ENCODE measurements at regions of chr17 and their contacts with region 1.

Region 1: DNA sequence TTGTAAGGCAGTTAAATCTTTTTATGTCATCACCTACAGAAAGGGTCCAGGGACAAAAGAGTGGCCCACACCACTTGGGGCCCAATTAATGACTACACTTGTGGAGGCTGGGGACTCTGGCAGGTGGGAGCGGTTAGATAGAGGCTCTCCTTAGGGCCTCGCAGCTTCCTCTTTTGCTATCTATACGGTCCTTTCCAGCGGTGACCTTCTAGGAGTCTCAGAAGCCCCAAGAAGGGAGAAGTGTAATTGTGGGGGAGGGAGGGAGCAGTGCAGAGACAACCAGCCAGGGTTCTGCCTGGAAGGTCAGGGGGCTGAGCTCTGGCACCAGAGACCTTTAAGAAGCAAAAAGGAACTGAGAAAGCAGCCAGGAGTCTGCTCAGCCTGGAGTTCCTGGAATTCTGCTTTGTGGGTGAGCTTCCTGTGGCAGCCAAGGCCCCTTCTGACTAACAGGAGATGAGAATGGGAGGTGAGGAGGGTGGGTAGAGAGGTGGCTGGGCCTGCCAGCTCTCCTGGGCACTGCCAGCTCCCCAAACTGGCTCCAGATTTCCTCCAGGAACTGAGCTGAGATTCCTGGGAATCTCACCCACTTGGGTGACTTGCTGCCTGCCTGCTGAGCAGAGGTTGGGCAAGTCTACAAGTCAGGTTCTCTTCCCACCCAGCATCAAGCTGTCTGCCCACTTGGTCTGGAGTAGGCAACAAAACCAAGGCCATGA is 16.3 kb upstream of the MAP3K14 start:
- DNase-seq: no peak
- ATAC-seq: peak; percentile 77
- H3K4me3 Mint-ChIP-seq: peak overlapping the region; percentile 46
- H3K27ac Mint-ChIP-seq: peak overlapping the region; percentile 69
- H3K4me1 Mint-ChIP-seq: peaks cover 43% of the 10 kb centered on the region
- H3K27me3 Mint-ChIP-seq: no peaks in the 10 kb centered on the region
- CTCF ChIP-seq: no peak

Region 2: DNA sequence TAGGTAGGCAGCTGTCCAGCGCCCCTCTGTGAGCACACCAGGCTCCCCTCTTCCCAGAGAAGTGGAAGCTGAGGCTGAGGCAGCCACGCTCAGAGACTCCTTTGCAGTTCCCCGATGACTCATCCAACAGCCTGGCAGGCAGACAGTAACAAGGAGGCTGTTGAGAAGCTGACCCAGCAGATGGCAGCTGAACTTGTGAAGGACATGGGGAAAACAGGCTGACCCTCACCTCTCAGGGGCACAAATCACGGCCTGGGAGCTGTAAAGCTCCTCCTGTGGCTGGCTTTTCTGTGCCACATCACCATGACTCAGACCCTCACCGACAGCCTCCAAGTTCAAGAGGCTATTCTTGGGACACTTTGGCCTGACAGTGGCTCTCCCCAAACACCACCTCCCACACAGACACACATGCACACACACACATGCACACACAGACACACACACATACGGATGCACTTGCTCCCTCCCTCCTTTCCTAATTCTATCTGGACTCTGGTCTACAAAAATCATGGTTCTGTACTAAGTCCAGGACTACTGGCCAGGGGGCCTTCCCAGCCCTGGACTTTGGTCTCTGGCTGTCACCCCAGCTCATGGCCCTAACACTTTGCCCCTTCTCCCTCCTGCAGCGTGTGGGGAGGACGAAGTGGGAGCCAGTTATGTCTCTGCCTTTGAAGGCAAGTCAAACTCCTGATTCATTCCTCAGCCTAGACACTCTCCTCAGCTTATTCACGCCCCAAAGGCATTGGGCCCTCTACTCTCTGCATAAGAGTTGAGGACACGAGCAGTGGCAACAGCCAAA is 39.5 kb before region 1 on chr17:
- CTCF ChIA-PET with region 1: no interaction called
- POLR2A ChIA-PET with region 1: interaction called, 5 read pairs
- intact Hi-C with region 1: loop called (anchors 5 kb)
- DNase-seq: no peak
- ATAC-seq: peak; percentile 35
- H3K4me3 Mint-ChIP-seq: peak overlapping the region; percentile 28
- H3K27ac Mint-ChIP-seq: peak overlapping the region; percentile 73
- H3K4me1 Mint-ChIP-seq: peaks cover 87% of the 10 kb centered on the region
- H3K27me3 Mint-ChIP-seq: no peaks in the 10 kb centered on the region
- CTCF ChIP-seq: no peak